ENCODE measurements at regions of chr6 and their contacts with region 1.

Region 1: GRCh38 chr6:42050266-42051032 is at the start of gene TAF8:
- DNase-seq: peak; percentile 72 to 94 (median 89)
- ATAC-seq: peak; percentile 57
- H3K4me3 ChIP-seq: peak within 1 kb of the TSS; percentile 98 to 99
- H3K4me3 Mint-ChIP-seq: peak within 1 kb of the TSS; percentile 95
- H3K27ac ChIP-seq: peak within 1 kb of the TSS; percentile 80 to 89
- H3K27ac Mint-ChIP-seq: peak within 1 kb of the TSS; percentile 97
- H3K4me1 ChIP-seq: peaks cover 39% of the 10 kb centered on the region
- H3K4me1 Mint-ChIP-seq: peaks cover 66% of the 10 kb centered on the region
- H3K27me3 ChIP-seq: no peaks in the 10 kb centered on the region
- H3K27me3 Mint-ChIP-seq: no peaks in the 10 kb centered on the region
- CTCF ChIP-seq: no peak
- total RNA-seq, gene TAF8: 24.6 to 33.3 TPM

Region 2: DNA sequence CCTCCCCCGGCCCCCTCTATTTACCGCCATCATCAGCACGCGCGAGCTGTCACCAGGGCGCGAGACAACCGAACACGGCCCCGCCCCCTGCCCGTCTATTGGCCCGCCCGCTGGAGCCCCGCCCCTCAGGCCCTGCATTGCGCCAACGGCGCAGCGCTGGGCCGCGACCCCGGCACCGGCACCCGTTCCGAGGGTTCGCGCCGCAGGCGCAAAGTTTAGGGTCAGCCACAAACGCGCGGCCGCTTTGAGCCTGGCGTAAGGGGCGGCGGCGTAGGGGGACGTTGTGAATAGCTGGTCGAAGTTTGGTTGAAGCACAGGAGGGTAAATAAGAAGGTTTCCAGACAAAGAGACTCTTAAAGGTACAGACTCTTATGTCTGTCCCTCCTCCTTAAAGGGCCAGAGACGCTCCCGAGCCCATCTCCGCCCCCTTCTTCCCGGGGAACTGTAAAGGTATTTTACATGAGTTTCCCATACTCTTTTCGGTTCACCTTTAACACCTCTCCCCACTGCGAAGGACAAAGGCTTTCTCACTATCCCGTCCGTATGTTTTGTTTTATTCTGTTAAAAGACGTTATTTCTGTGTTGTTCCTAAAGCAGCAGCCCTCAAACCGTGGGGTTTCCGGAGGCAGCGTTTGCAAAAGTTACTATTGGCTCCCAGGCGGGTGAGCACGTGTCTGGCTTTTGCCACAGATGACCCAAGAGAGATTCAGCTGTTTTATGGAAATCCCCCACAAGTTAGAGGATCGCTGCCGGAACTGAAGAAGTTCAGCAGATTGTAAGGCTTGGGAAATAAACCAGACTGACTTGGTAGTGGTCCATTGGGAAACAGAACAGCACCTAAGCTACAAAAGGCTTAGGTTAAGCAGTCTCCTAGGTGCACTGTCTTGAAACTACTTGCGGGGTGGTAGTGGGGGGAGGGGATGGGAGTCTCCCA is 154.9 kb before region 1 on chr6 and contains the start of gene USP49:
- CTCF ChIA-PET with region 1: interaction called, 135 read pairs
- POLR2A ChIA-PET with region 1: interaction called, 5 read pairs
- intact Hi-C with region 1: loop called (anchors 1 to 2 kb)
- DNase-seq: peak; percentile 80 to 94 (median 91)
- ATAC-seq: peak; percentile 95
- H3K4me3 ChIP-seq: peak within 1 kb of the TSS; percentile 78 to 90
- H3K4me3 Mint-ChIP-seq: no peak within 1 kb of the TSS
- H3K27ac ChIP-seq: peak within 1 kb of the TSS; percentile 55 to 77
- H3K27ac Mint-ChIP-seq: peak within 1 kb of the TSS; percentile 89
- H3K4me1 ChIP-seq: peaks cover 24% of the 10 kb centered on the region
- H3K4me1 Mint-ChIP-seq: peaks cover 10% of the 10 kb centered on the region
- H3K27me3 ChIP-seq: no peaks in the 10 kb centered on the region
- H3K27me3 Mint-ChIP-seq: no peaks in the 10 kb centered on the region
- CTCF ChIP-seq: no peak
- total RNA-seq, gene USP49: 1.6 to 1.8 TPM

Region 3: GRCh38 chr6:41920921-41921711 is 129.3 kb before region 1 on chr6 and contains the starts of genes BYSL and MED20:
- CTCF ChIA-PET with region 1: interaction called, 44 read pairs
- POLR2A ChIA-PET with region 1: interaction called, 17 read pairs
- intact Hi-C with region 1: loop called in 1 of 2 experiments (anchors 1 kb)
- DNase-seq: peak; percentile 86 to 98 (median 94)
- ATAC-seq: peak; percentile 92
- H3K4me3 ChIP-seq: peak within 1 kb of the TSS; percentile 96 to 97
- H3K4me3 Mint-ChIP-seq: peak within 1 kb of the TSS; percentile 100
- H3K27ac ChIP-seq: peak within 1 kb of the TSS; percentile 83 to 99
- H3K27ac Mint-ChIP-seq: peak within 1 kb of the TSS; percentile 100
- H3K4me1 ChIP-seq: peaks cover 32% of the 10 kb centered on the region
- H3K4me1 Mint-ChIP-seq: peaks cover 53% of the 10 kb centered on the region
- H3K27me3 ChIP-seq: no peaks in the 10 kb centered on the region
- H3K27me3 Mint-ChIP-seq: no peaks in the 10 kb centered on the region
- CTCF ChIP-seq: peak; percentile 97
- total RNA-seq, gene BYSL: 3.2 to 6.2 TPM
- total RNA-seq, gene MED20: 1.8 TPM

Region 4: DNA sequence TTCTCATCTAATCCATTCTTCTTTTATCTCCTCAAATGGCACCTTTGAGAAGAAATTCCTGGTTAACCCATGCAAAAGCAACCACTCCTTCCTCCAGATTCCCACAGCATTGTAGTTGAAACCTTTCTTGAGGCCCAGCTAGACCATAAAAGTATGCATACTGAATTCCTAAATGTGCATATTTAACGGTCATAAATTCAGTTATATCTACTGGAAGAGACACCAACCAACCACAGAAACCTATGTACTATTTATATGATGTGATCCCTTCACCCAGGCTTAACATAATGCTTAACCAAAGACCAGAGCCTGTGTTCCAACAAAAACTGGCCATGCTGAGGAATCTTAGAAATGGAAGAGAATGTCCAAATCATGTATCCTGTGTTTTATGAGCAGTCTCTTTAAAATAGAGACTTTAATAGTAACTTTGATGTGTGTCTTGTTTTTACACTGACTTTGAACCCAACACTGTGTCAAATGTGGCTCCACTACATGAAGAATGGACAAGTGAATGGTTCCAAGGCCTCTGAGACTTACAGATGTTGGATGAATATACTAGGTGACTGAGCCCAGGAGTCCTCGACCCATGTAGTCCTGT is 11.5 kb before region 1 on chr6:
- CTCF ChIA-PET with region 1: interaction called, 64 read pairs
- POLR2A ChIA-PET with region 1: interaction called, 7 read pairs
- intact Hi-C with region 1: no loop called
- DNase-seq: no peak
- ATAC-seq: no peak
- H3K4me3 ChIP-seq: peak overlapping the region; percentile 34 to 52
- H3K4me3 Mint-ChIP-seq: peak overlapping the region; percentile 79
- H3K27ac ChIP-seq: peak overlapping the region; percentile 32 to 57
- H3K27ac Mint-ChIP-seq: peak overlapping the region; percentile 95
- H3K4me1 ChIP-seq: peaks cover 80% of the 10 kb centered on the region
- H3K4me1 Mint-ChIP-seq: peaks cover 75% of the 10 kb centered on the region
- H3K27me3 ChIP-seq: no peaks in the 10 kb centered on the region
- H3K27me3 Mint-ChIP-seq: no peaks in the 10 kb centered on the region
- CTCF ChIP-seq: no peak

Region 5: DNA sequence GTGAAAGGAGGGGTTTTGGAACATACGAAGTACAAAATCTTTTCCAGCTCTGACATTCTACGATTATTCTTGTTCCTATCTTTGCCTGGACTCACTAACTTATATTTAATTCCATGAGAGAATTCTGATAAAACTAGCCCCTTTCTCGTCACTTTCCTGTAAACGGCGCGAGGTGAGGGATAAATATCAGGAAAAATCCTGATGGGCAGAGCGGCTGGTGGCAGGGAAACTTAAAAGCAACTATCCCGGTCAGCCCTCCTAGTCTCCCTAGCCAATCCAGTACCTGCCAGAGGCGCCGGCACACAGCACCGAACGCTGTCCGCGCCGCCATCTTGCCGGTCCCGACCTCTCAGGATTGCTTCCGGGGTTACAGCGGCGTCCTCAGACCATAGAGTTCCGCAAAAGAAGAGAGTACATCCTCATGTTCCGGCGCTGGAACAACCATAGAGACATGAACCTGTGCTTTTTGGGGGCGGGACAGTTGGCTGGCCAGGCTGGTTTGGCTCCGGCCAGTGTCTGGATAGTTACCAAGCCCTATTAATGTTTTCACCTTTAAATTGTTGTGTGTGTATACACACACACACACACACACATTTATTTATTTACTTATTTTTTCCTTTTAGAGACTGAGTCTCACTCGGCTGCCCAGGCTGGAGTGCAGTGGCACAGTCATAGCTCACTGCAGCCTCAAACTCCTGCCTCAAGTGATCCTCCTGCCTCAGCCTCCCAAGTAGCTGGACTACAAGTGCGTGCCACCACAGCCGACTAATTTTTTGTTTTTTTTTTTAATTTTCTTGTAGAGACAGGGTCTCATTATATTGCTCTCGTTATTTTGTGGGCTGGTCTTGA is 167.3 kb after region 1 on chr6 and contains the start of gene MRPS10:
- CTCF ChIA-PET with region 1: interaction called, 4 read pairs
- POLR2A ChIA-PET with region 1: no interaction called
- intact Hi-C with region 1: loop called (anchors 2 kb)
- DNase-seq: peak; percentile 81 to 95 (median 91)
- ATAC-seq: peak; percentile 99
- H3K4me3 ChIP-seq: peak within 1 kb of the TSS; percentile 70 to 93
- H3K4me3 Mint-ChIP-seq: peak within 1 kb of the TSS; percentile 99
- H3K27ac ChIP-seq: peak within 1 kb of the TSS; percentile 63 to 74
- H3K27ac Mint-ChIP-seq: peak within 1 kb of the TSS; percentile 97
- H3K4me1 ChIP-seq: peaks cover 8% of the 10 kb centered on the region
- H3K4me1 Mint-ChIP-seq: peaks cover 25% of the 10 kb centered on the region
- H3K27me3 ChIP-seq: no peaks in the 10 kb centered on the region
- H3K27me3 Mint-ChIP-seq: no peaks in the 10 kb centered on the region
- CTCF ChIP-seq: no peak
- total RNA-seq, gene MRPS10: 17.0 to 17.4 TPM